HEK293T (cell line): ENCODE measurements at regions of chr2 and their contacts with region 1.

Region 1: DNA sequence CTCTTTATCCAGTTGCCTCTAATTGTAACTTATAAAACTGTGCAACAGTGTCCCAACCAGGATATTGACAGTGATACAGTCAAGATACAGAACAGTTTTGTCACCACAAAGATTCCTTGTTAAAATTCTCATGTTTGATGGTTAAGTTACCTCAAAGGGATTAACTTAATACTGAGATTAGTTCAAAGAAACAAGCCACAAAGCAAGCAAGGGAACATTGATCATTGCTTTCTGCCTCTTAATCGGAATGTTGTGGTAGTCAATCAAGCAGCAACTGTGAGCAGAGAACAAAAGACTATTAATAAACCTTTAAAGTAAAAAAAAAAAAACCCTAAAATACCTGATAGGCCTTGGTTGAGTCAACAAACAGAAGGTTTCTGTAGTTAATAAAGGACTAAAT is 352.3 kb downstream of the PARD3B start:
- DNase-seq: no peak

Region 2: GRCh38 chr2:205103699-205104098 is 206.1 kb after region 1 on chr2:
- CTCF ChIA-PET with region 1: interaction called, 10 read pairs
- POLR2A ChIA-PET with region 1: no interaction called
- DNase-seq: no peak